BJ (cell line): ENCODE measurements at regions of chr6 and their contacts with region 1.

Region 1: GRCh38 chr6:46848684-46849360 is 55.6 kb downstream of the MEP1A start:
- DNase-seq: peak; percentile 0
- H3K4me3 ChIP-seq: no peak overlapping the region
- H3K27me3 ChIP-seq: no peaks in the 10 kb centered on the region
- CTCF ChIP-seq: peak; percentile 97

Region 2: GRCh38 chr6:46862381-46862780 is 13.6 kb after region 1 on chr6:
- CTCF ChIA-PET with region 1: interaction called, 29 read pairs
- POLR2A ChIA-PET with region 1: no interaction called
- DNase-seq: no peak
- H3K4me3 ChIP-seq: no peak overlapping the region
- H3K27me3 ChIP-seq: 0 out of 2 replicates have a peak, but pooled peaks cover 1% of the 10 kb centered on the region
- CTCF ChIP-seq: no peak

Region 3: GRCh38 chr6:46876126-46876525 is 27.3 kb after region 1 on chr6:
- CTCF ChIA-PET with region 1: interaction called, 16 read pairs
- POLR2A ChIA-PET with region 1: no interaction called
- DNase-seq: no peak
- H3K4me3 ChIP-seq: no peak overlapping the region
- H3K27me3 ChIP-seq: no peaks in the 10 kb centered on the region
- CTCF ChIP-seq: no peak

Region 4: GRCh38 chr6:46983007-46983411 is 134.2 kb after region 1 on chr6:
- CTCF ChIA-PET with region 1: interaction called, 29 read pairs
- POLR2A ChIA-PET with region 1: no interaction called
- DNase-seq: peak; percentile 74
- H3K4me3 ChIP-seq: no peak overlapping the region
- H3K27me3 ChIP-seq: no peaks in the 10 kb centered on the region
- CTCF ChIP-seq: 0 out of 2 replicates have a peak, but pooled peaks have one; percentile 4

Region 5: GRCh38 chr6:46993846-46994245 is 145.0 kb after region 1 on chr6:
- CTCF ChIA-PET with region 1: interaction called, 59 read pairs
- POLR2A ChIA-PET with region 1: no interaction called
- DNase-seq: peak; percentile 57
- H3K4me3 ChIP-seq: no peak overlapping the region
- H3K27me3 ChIP-seq: 0 out of 2 replicates have a peak, but pooled peaks cover 2% of the 10 kb centered on the region
- CTCF ChIP-seq: no peak

Region 6: DNA sequence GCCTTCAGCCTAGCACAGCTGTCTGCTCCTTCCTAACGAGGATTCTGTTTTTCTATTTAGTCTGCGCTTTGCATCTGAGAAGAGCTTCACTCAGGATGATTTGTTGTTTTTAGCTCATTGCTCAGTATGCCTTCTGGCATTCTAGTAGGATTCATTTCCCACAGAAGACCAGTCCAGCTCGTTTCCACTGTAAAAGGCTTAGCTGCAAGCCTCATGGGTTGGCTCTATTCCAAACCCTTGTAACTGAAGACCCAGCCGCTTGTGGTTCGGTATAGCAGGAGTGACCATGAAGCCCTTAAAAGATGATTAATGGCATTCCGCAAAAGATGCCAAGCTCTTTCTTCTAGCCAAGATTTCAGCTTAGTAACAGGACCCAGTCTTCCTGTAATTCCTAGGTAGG is 186.1 kb after region 1 on chr6:
- CTCF ChIA-PET with region 1: interaction called, 12 read pairs
- POLR2A ChIA-PET with region 1: no interaction called
- DNase-seq: peak; percentile 85
- H3K4me3 ChIP-seq: no peak overlapping the region
- H3K27me3 ChIP-seq: peaks cover 6% of the 10 kb centered on the region
- CTCF ChIP-seq: no peak

Region 7: GRCh38 chr6:47047479-47048407 is 198.9 kb after region 1 on chr6:
- CTCF ChIA-PET with region 1: interaction called, 34 read pairs
- POLR2A ChIA-PET with region 1: no interaction called
- DNase-seq: peak; percentile 53
- H3K4me3 ChIP-seq: no peak overlapping the region
- H3K27me3 ChIP-seq: no peaks in the 10 kb centered on the region
- CTCF ChIP-seq: peak; percentile 81

Region 8: DNA sequence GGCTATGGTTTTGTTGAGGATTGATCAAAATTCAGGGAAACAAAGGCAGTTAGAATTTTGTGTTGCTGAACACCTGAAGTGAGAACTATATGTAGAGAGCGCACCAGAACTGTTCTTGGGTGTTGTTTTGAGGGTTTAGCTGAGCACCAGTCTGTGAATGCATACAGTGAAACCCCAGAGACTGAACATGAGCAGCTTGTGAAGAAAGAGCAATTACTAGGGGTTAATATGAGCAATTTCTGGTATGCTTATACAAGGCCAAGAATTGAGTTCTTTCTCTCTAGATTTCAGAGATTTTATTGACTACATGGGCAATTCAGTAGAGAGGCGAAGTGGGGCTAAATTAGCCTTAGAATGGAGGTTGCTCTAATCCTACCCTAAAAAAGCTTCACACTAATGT is 722.7 kb after region 1 on chr6:
- CTCF ChIA-PET with region 1: no interaction called
- POLR2A ChIA-PET with region 1: no interaction called
- DNase-seq: no peak
- H3K4me3 ChIP-seq: no peak overlapping the region
- H3K27me3 ChIP-seq: no peaks in the 10 kb centered on the region
- CTCF ChIP-seq: no peak